Breast epithelium (tissue), 4 donors: ENCODE measurements at regions of chr1 and their contacts with region 1.

Region 1: DNA sequence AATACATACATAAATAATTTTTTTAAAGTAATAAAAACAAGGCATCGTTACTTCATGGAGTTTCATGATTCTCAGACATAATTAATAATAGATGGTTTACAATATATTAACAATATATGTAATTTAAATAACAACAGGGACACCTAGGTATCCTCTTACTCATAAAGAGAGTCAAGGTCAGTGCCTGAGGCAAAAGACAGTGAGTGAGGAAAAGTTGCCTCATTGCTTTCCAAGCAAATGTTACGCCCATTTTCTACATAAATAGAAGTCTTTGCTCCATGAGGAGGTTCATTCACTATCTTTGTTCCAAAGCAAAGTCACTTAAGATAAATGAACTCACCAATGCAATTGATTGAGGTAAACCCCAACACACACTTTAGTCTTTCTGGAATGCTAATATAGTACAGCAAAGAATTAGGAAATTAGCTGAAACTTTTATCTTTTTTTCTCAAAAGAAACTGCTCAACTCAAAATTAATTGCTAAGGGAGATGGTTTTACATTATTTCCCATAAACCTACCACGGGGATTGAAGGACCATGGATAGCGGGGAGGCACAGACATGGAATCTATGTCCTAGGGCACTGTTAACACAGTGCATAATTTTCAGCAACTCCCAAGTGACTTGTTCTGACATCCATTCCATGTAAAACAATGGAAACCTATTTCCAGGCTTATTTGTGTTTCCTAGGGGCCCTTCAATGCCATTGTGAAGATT is 19.6 kb downstream of the BCL9 start:
- DNase-seq: no peak
- H3K4me3 ChIP-seq: no peak overlapping the region
- H3K27ac ChIP-seq: no peak overlapping the region
- H3K4me1 ChIP-seq: no peaks in the 10 kb centered on the region
- H3K27me3 ChIP-seq: no peaks in the 10 kb centered on the region
- CTCF ChIP-seq: no peak
- POLR2A ChIP-seq: no peak

Region 2: DNA sequence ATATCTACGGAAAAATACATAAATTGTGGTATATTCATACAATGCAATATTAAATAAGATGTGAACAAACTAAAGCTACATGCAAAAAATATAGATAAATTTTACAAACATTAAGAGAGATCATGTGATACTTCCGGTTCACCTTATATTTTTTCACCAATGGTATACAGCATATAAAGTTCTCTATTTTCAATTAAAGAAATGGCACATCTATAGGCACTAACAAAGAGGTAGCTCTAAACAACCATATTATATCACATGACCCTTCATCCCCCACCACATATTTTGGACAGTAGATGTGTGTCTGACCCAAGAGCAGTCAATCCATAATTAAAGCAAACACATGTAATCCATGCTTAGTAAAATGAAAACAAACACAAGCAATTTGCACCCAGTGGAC is 75.1 kb before region 1 on chr1:
- intact Hi-C with region 1: loop called (anchors 2 kb)
- DNase-seq: no peak
- H3K4me3 ChIP-seq: no peak overlapping the region
- H3K27ac ChIP-seq: no peak overlapping the region
- H3K4me1 ChIP-seq: no peaks in the 10 kb centered on the region
- H3K27me3 ChIP-seq: no peaks in the 10 kb centered on the region
- CTCF ChIP-seq: no peak
- POLR2A ChIP-seq: no peak